SK-N-SH (cell line): ENCODE measurements at regions of chr18 and their contacts with region 1.

Region 1: GRCh38 chr18:10519999-10520935 is 5.6 kb upstream of the NAPG start:
- DNase-seq: peak; percentile 73
- H3K4me3 ChIP-seq: peak overlapping the region in 1 of 2 experiments; percentile 37; a peak in 1 of 4 replicates
- H3K27ac ChIP-seq: no peak overlapping the region
- H3K4me1 ChIP-seq: peaks cover 0 to 12% of the 10 kb centered on the region in 2 experiments; a peak in 3 of 4 replicates
- H3K27me3 ChIP-seq: no peaks in the 10 kb centered on the region; the same call in 1 of the 2 replicates
- CTCF ChIP-seq: peak; percentile 88
- EP300 ChIP-seq: no peak
- RAD21 ChIP-seq: peak; percentile 98

Region 2: GRCh38 chr18:9982711-9983110 is 537.6 kb before region 1 on chr18:
- CTCF ChIA-PET with region 1: interaction called, 10 read pairs
- POLR2A ChIA-PET with region 1: no interaction called
- DNase-seq: no peak
- H3K4me3 ChIP-seq: no peak overlapping the region
- H3K27ac ChIP-seq: no peak overlapping the region
- H3K4me1 ChIP-seq: no peaks in the 10 kb centered on the region
- H3K27me3 ChIP-seq: no peaks in the 10 kb centered on the region
- CTCF ChIP-seq: no peak
- EP300 ChIP-seq: no peak
- RAD21 ChIP-seq: no peak

Region 3: GRCh38 chr18:10006311-10006893 is 513.9 kb before region 1 on chr18:
- CTCF ChIA-PET with region 1: interaction called, 32 read pairs
- POLR2A ChIA-PET with region 1: no interaction called
- DNase-seq: peak; percentile 50
- H3K4me3 ChIP-seq: no peak overlapping the region
- H3K27ac ChIP-seq: no peak overlapping the region
- H3K4me1 ChIP-seq: no peaks in the 10 kb centered on the region; a peak in 1 of 4 replicates
- H3K27me3 ChIP-seq: no peaks in the 10 kb centered on the region
- CTCF ChIP-seq: peak; percentile 48
- EP300 ChIP-seq: no peak
- RAD21 ChIP-seq: peak; percentile 66

Region 4: GRCh38 chr18:10343778-10344177 is 176.5 kb before region 1 on chr18:
- CTCF ChIA-PET with region 1: no interaction called
- POLR2A ChIA-PET with region 1: no interaction called
- DNase-seq: no peak
- H3K4me3 ChIP-seq: no peak overlapping the region
- H3K27ac ChIP-seq: no peak overlapping the region
- H3K4me1 ChIP-seq: no peaks in the 10 kb centered on the region
- H3K27me3 ChIP-seq: no peaks in the 10 kb centered on the region
- CTCF ChIP-seq: no peak
- EP300 ChIP-seq: no peak
- RAD21 ChIP-seq: no peak

Region 5: GRCh38 chr18:10490401-10491165 is 29.7 kb before region 1 on chr18:
- CTCF ChIA-PET with region 1: interaction called, 10 read pairs
- POLR2A ChIA-PET with region 1: no interaction called
- DNase-seq: no peak
- H3K4me3 ChIP-seq: no peak overlapping the region
- H3K27ac ChIP-seq: no peak overlapping the region
- H3K4me1 ChIP-seq: no peaks in the 10 kb centered on the region; a peak in 1 of 4 replicates
- H3K27me3 ChIP-seq: no peaks in the 10 kb centered on the region
- CTCF ChIP-seq: no peak
- EP300 ChIP-seq: no peak
- RAD21 ChIP-seq: peak; percentile 9; the same call in 1 of the 2 replicates